GM12878 (cell line): ENCODE measurements at regions of chr1 and their contacts with region 1.

Region 1: GRCh38 chr1:89762779-89763648 is 57.8 kb upstream of the LRRC8D start:
- DNase-seq: peak; percentile 40
- ATAC-seq: peak; percentile 100
- H3K4me3 ChIP-seq: peak overlapping the region; percentile 66
- H3K27ac ChIP-seq: no peak overlapping the region
- H3K4me1 ChIP-seq: peaks cover 5% of the 10 kb centered on the region; the same call in 1 of the 2 replicates
- H3K27me3 ChIP-seq: no peaks in the 10 kb centered on the region
- CTCF ChIP-seq: peak; percentile 95 to 99 (median 99); a peak in 5 of 6 replicates
- EP300 ChIP-seq: no peak
- POLR2A ChIP-seq: no peak
- RAD21 ChIP-seq: peak; percentile 98

Region 2: GRCh38 chr1:88891318-88891950 is 871.6 kb before region 1 on chr1 and contains the start of gene GTF2B:
- CTCF ChIA-PET with region 1: no interaction called
- POLR2A ChIA-PET with region 1: no interaction called
- RAD21 ChIA-PET with region 1: no interaction called
- SMC1A ChIA-PET with region 1: no interaction called
- in situ Hi-C with region 1: no loop called
- intact Hi-C with region 1: no loop called
- DNase-seq: peak; percentile 96
- ATAC-seq: peak; percentile 92
- H3K4me3 ChIP-seq: peak within 1 kb of the TSS; percentile 97
- H3K27ac ChIP-seq: peak within 1 kb of the TSS; percentile 91
- H3K4me1 ChIP-seq: peaks cover 2% of the 10 kb centered on the region; the same call in 1 of the 2 replicates
- H3K27me3 ChIP-seq: no peaks in the 10 kb centered on the region
- CTCF ChIP-seq: no peak
- EP300 ChIP-seq: peak in 1 of 2 experiments; percentile 61; a peak in 2 of 4 replicates
- POLR2A ChIP-seq: peak; percentile 100
- RAD21 ChIP-seq: no peak
- polyA plus RNA-seq, gene GTF2B: 71.0 to 79.7 TPM

Region 3: GRCh38 chr1:89483010-89483756 is 279.8 kb before region 1 on chr1:
- CTCF ChIA-PET with region 1: interaction called, 82 read pairs
- POLR2A ChIA-PET with region 1: no interaction called
- RAD21 ChIA-PET with region 1: interaction called, 50 read pairs
- SMC1A ChIA-PET with region 1: interaction called, 73 read pairs
- in situ Hi-C with region 1: loop called (anchors 10 kb)
- intact Hi-C with region 1: loop called (anchors 1 kb)
- DNase-seq: peak; percentile 46
- ATAC-seq: peak; percentile 97
- H3K4me3 ChIP-seq: no peak overlapping the region
- H3K27ac ChIP-seq: no peak overlapping the region
- H3K4me1 ChIP-seq: no peaks in the 10 kb centered on the region
- H3K27me3 ChIP-seq: no peaks in the 10 kb centered on the region
- CTCF ChIP-seq: peak; percentile 72 to 82 (median 78)
- EP300 ChIP-seq: no peak
- POLR2A ChIP-seq: no peak
- RAD21 ChIP-seq: peak; percentile 77

Region 4: GRCh38 chr1:89598450-89599331 is 164.3 kb before region 1 on chr1:
- CTCF ChIA-PET with region 1: interaction called, 59 read pairs
- POLR2A ChIA-PET with region 1: no interaction called
- RAD21 ChIA-PET with region 1: interaction called, 22 read pairs
- SMC1A ChIA-PET with region 1: interaction called, 124 read pairs
- in situ Hi-C with region 1: no loop called
- intact Hi-C with region 1: no loop called
- DNase-seq: no peak
- ATAC-seq: peak; percentile 88
- H3K4me3 ChIP-seq: no peak overlapping the region
- H3K27ac ChIP-seq: no peak overlapping the region
- H3K4me1 ChIP-seq: peaks cover 9% of the 10 kb centered on the region
- H3K27me3 ChIP-seq: no peaks in the 10 kb centered on the region
- CTCF ChIP-seq: peak; percentile 53 to 62 (median 56)
- EP300 ChIP-seq: no peak
- POLR2A ChIP-seq: no peak
- RAD21 ChIP-seq: peak; percentile 67

Region 5: DNA sequence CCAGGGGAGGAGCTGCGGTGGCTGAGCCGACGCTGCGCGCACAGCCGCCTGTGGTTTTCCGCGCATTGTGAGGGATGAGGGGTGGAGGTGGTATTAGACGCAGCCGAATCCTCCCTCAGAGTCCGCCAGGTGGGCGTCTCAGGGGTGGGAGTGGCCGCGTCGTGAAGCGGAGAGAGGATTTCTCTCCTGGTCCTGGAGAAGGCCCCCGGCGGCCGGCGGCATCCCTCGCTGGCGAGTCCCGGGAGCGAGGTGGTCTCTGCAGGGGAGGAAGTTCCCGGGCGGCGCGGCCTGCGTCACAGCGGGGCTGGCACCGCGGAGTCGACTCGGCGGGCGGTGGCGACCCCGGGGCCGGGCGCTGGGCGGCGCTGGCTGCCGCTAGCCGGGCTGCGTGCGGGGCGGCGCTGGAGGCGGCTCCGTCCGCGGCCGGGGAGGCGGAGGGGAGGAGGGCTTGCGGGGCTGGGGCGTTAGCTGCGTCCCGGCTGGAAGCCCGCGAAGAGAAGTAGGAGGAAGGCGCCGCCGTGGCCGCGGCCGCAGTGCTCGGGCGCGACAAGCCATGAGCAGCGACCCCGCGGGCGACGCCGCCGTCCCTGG is 130.3 kb before region 1 on chr1 and contains the start of gene LRRC8C:
- CTCF ChIA-PET with region 1: interaction called, 369 read pairs
- POLR2A ChIA-PET with region 1: interaction called, 13 read pairs
- RAD21 ChIA-PET with region 1: interaction called, 302 read pairs
- SMC1A ChIA-PET with region 1: interaction called, 391 read pairs
- in situ Hi-C with region 1: loop called (anchors 5 kb)
- intact Hi-C with region 1: loop called (anchors 1 kb)
- DNase-seq: no peak
- ATAC-seq: peak; percentile 85
- H3K4me3 ChIP-seq: peak within 1 kb of the TSS; percentile 88
- H3K27ac ChIP-seq: peak within 1 kb of the TSS; percentile 76
- H3K4me1 ChIP-seq: peaks cover 12% of the 10 kb centered on the region
- H3K27me3 ChIP-seq: no peaks in the 10 kb centered on the region; a peak in 1 of 4 replicates
- CTCF ChIP-seq: peak; percentile 23 to 68 (median 41); a peak in 4 of 6 replicates
- EP300 ChIP-seq: no peak; a peak in 1 of 4 replicates
- POLR2A ChIP-seq: 0 out of 2 replicates have a peak, but pooled peaks have one; percentile 19
- RAD21 ChIP-seq: peak; percentile 80
- polyA plus RNA-seq, gene LRRC8C: 2.3 to 3.1 TPM

Region 6: DNA sequence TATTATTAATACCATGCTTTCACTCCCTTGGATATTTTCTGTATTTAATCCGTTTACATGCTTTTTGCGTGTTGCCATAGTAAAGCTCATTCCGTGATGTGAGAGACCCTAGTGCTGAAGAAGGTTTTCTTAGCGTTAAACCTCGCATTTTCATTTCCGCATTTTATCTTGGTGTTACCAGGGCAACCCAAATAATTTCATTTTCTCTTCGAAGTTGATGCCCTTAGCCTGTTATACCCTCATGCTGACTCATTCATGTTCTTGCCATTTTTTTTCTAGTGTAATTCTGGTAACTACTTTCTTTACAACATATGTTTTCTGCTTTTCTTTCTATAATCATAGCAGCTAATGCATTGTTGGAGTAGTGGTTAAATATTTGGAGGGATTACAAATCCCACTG is 92.9 kb before region 1 on chr1:
- CTCF ChIA-PET with region 1: interaction called, 21 read pairs
- POLR2A ChIA-PET with region 1: interaction called, 4 read pairs
- RAD21 ChIA-PET with region 1: interaction called, 10 read pairs
- SMC1A ChIA-PET with region 1: interaction called, 28 read pairs
- in situ Hi-C with region 1: no loop called
- intact Hi-C with region 1: no loop called
- DNase-seq: peak; percentile 94
- ATAC-seq: peak; percentile 93
- H3K4me3 ChIP-seq: no peak overlapping the region; the same call in 1 of the 2 replicates
- H3K27ac ChIP-seq: peak overlapping the region; percentile 72
- H3K4me1 ChIP-seq: peaks cover 37% of the 10 kb centered on the region
- H3K27me3 ChIP-seq: no peaks in the 10 kb centered on the region
- CTCF ChIP-seq: no peak
- EP300 ChIP-seq: peak; percentile 98
- POLR2A ChIP-seq: no peak
- RAD21 ChIP-seq: no peak

Region 7: GRCh38 chr1:89719502-89720306 is 43.3 kb before region 1 on chr1:
- CTCF ChIA-PET with region 1: interaction called, 37 read pairs
- POLR2A ChIA-PET with region 1: interaction called, 7 read pairs
- RAD21 ChIA-PET with region 1: interaction called, 22 read pairs
- SMC1A ChIA-PET with region 1: interaction called, 26 read pairs
- in situ Hi-C with region 1: no loop called
- intact Hi-C with region 1: loop called (anchors 2 kb)
- DNase-seq: peak; percentile 80
- ATAC-seq: peak; percentile 92
- H3K4me3 ChIP-seq: 0 out of 2 replicates have a peak overlapping the region, but pooled peaks have one; percentile 19
- H3K27ac ChIP-seq: 0 out of 2 replicates have a peak overlapping the region, but pooled peaks have one; percentile 4
- H3K4me1 ChIP-seq: peaks cover 28% of the 10 kb centered on the region
- H3K27me3 ChIP-seq: no peaks in the 10 kb centered on the region
- CTCF ChIP-seq: no peak
- EP300 ChIP-seq: peak; percentile 64 to 88; a peak in 2 of 4 replicates
- POLR2A ChIP-seq: no peak
- RAD21 ChIP-seq: peak; percentile 9; the same call in 1 of the 2 replicates

Region 8: GRCh38 chr1:89804642-89805237 is 41.7 kb after region 1 on chr1:
- CTCF ChIA-PET with region 1: interaction called, 13 read pairs
- POLR2A ChIA-PET with region 1: no interaction called
- RAD21 ChIA-PET with region 1: interaction called, 4 read pairs
- SMC1A ChIA-PET with region 1: interaction called, 3 read pairs
- in situ Hi-C with region 1: no loop called
- intact Hi-C with region 1: no loop called
- DNase-seq: peak; percentile 69
- ATAC-seq: peak; percentile 94
- H3K4me3 ChIP-seq: no peak overlapping the region
- H3K27ac ChIP-seq: no peak overlapping the region
- H3K4me1 ChIP-seq: peaks cover 10% of the 10 kb centered on the region
- H3K27me3 ChIP-seq: no peaks in the 10 kb centered on the region; a peak in 1 of 4 replicates
- CTCF ChIP-seq: peak; percentile 86 to 96 (median 88)
- EP300 ChIP-seq: no peak
- POLR2A ChIP-seq: no peak
- RAD21 ChIP-seq: peak; percentile 99

Region 9: GRCh38 chr1:90045853-90046563 is 283.0 kb after region 1 on chr1:
- CTCF ChIA-PET with region 1: no interaction called
- POLR2A ChIA-PET with region 1: no interaction called
- RAD21 ChIA-PET with region 1: no interaction called
- SMC1A ChIA-PET with region 1: no interaction called
- in situ Hi-C with region 1: no loop called
- intact Hi-C with region 1: no loop called
- DNase-seq: no peak
- ATAC-seq: peak; percentile 85
- H3K4me3 ChIP-seq: no peak overlapping the region
- H3K27ac ChIP-seq: no peak overlapping the region
- H3K4me1 ChIP-seq: no peaks in the 10 kb centered on the region
- H3K27me3 ChIP-seq: no peaks in the 10 kb centered on the region
- CTCF ChIP-seq: peak; percentile 58 to 68 (median 64)
- EP300 ChIP-seq: no peak
- POLR2A ChIP-seq: no peak
- RAD21 ChIP-seq: peak; percentile 60

Region 10: DNA sequence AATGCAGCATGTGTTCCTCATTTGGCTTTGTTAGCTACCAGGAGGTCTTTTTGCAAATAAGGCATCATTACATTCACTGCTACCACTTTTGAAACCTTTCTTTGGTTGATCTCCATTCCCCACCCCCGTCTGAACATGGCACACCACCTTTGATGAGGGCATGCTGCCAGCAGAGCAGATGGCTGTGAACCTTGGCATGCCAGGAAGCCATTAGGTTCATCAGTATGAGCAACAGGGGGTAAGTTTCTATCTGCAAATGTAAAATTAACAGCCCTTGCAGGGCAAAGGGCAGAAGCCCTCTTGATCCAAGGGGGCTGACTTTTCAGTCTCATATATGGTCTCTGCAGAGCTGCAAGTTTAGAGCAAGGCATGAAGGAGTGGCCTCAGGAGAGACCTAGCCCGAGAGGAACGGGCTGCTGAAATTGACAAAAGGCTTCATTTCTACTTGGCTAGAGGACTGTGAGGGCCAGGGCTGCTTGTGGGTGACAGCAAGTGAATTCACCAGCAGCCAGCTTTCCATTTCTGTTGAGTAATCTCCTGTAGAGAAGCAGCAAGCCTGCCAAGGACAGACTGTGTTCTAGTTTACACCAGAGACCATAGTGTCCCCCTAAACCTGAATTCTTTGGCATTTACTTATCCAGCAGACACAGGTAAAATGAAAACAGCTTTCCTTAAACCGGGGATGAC is 359.8 kb after region 1 on chr1:
- CTCF ChIA-PET with region 1: no interaction called
- POLR2A ChIA-PET with region 1: no interaction called
- RAD21 ChIA-PET with region 1: no interaction called
- SMC1A ChIA-PET with region 1: no interaction called
- in situ Hi-C with region 1: no loop called
- intact Hi-C with region 1: no loop called
- DNase-seq: no peak
- ATAC-seq: no peak
- H3K4me3 ChIP-seq: no peak overlapping the region
- H3K27ac ChIP-seq: no peak overlapping the region
- H3K4me1 ChIP-seq: no peaks in the 10 kb centered on the region
- H3K27me3 ChIP-seq: no peaks in the 10 kb centered on the region
- CTCF ChIP-seq: no peak
- EP300 ChIP-seq: no peak
- POLR2A ChIP-seq: no peak
- RAD21 ChIP-seq: no peak

Region 11: GRCh38 chr1:90201467-90202358 is 438.7 kb after region 1 on chr1:
- CTCF ChIA-PET with region 1: no interaction called
- POLR2A ChIA-PET with region 1: no interaction called
- RAD21 ChIA-PET with region 1: no interaction called
- SMC1A ChIA-PET with region 1: no interaction called
- in situ Hi-C with region 1: no loop called
- intact Hi-C with region 1: no loop called
- DNase-seq: no peak
- ATAC-seq: peak; percentile 47
- H3K4me3 ChIP-seq: no peak overlapping the region
- H3K27ac ChIP-seq: no peak overlapping the region
- H3K4me1 ChIP-seq: no peaks in the 10 kb centered on the region
- H3K27me3 ChIP-seq: no peaks in the 10 kb centered on the region; a peak in 1 of 4 replicates
- CTCF ChIP-seq: no peak
- EP300 ChIP-seq: no peak
- POLR2A ChIP-seq: no peak
- RAD21 ChIP-seq: no peak